Natural killer cell (primary cell): ENCODE measurements at regions of chr17 and their contacts with region 1.

Region 1: DNA sequence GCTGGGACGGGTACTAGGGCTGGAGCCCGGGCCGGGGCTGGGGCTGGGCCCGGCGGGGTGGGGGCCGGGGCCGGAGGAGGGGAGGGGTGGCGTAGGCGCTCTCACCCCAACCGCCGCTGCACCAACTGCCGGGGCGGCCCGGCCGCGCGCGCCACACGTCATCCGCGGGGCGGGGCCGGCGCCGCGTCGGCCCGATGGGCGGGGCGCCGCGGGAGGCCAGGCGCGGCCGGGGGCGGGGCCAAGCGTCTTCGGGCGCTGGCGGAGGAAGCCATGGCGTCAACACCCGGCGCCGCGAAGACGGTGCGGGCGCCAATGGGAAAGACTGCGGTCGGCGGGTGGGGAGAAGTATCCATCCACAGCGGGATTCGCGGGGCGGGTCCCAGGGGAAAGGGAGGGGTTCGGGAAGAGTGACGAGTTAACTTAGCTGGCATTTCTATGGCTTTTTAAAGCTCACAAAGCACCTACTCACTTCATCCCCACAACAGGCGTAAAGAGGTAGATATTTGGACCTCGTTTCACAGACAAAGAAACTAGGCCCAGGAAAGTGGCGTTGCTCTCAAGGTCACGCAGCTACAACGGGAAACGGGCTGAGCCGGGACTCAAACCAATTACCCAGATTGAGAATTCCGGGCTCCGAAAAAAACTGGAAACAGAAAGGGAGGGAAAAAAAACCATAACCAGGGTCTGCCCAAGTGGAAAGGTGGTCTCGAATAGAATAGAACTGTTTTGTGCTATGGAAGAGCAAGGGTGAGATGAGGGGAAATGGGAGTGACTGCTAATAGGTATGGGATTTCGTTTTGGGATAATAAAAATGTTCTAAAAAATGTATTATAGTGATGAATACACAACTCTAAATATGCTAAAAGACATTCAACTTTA is at the start of gene SPAG9:
- DNase-seq: peak; percentile 93 to 97
- ATAC-seq: peak; percentile 84 to 95 (median 89)
- H3K4me3 ChIP-seq: peak within 1 kb of the TSS; percentile 85
- H3K4me3 Mint-ChIP-seq: peak within 1 kb of the TSS; percentile 94
- H3K27ac ChIP-seq: peak within 1 kb of the TSS; percentile 93
- H3K27ac Mint-ChIP-seq: peak within 1 kb of the TSS; percentile 96 to 97
- H3K4me1 ChIP-seq: peaks cover 27% of the 10 kb centered on the region
- H3K4me1 Mint-ChIP-seq: peaks cover 42 to 51% of the 10 kb centered on the region in 2 donors
- H3K27me3 ChIP-seq: no peaks in the 10 kb centered on the region
- H3K27me3 Mint-ChIP-seq: no peaks in the 10 kb centered on the region
- CTCF ChIP-seq: no peak
- total RNA-seq, gene SPAG9: 78.1 to 91.7 (median 90.3) TPM

Region 2: GRCh38 chr17:51035431-51035830 is 85.5 kb before region 1 on chr17:
- intact Hi-C with region 1: loop called (anchors 10 kb)
- DNase-seq: no peak
- ATAC-seq: no peak
- H3K4me3 ChIP-seq: no peak overlapping the region
- H3K4me3 Mint-ChIP-seq: no peak overlapping the region
- H3K27ac ChIP-seq: no peak overlapping the region
- H3K27ac Mint-ChIP-seq: no peak overlapping the region
- H3K4me1 ChIP-seq: no peaks in the 10 kb centered on the region
- H3K4me1 Mint-ChIP-seq: peaks cover 13 to 22% of the 10 kb centered on the region in 2 donors
- H3K27me3 ChIP-seq: no peaks in the 10 kb centered on the region
- H3K27me3 Mint-ChIP-seq: no peaks in the 10 kb centered on the region
- CTCF ChIP-seq: no peak

Region 3: DNA sequence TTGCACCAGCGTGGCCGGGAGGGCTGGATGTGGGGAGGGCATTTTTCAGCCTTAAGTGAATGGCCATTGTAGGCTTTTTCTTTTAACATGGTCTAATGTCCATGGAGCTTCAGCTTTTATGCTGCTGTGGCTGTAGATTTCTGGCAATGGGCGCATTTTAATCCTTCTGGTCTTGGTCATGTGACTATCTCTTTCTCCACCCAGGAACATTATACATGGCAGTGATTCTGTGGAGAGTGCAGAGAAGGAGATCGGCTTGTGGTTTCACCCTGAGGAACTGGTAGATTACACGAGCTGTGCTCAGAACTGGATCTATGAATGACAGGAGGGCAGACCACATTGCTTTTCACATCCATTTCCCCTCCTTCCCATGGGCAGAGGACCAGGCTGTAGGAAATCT is 40.5 kb after region 1 on chr17:
- intact Hi-C with region 1: no loop called
- DNase-seq: no peak
- ATAC-seq: no peak
- H3K4me3 ChIP-seq: no peak overlapping the region
- H3K4me3 Mint-ChIP-seq: no peak overlapping the region
- H3K27ac ChIP-seq: no peak overlapping the region
- H3K27ac Mint-ChIP-seq: no peak overlapping the region
- H3K4me1 ChIP-seq: peaks cover 11% of the 10 kb centered on the region
- H3K4me1 Mint-ChIP-seq: peaks cover 10 to 16% of the 10 kb centered on the region in 2 donors
- H3K27me3 ChIP-seq: no peaks in the 10 kb centered on the region
- H3K27me3 Mint-ChIP-seq: no peaks in the 10 kb centered on the region
- CTCF ChIP-seq: no peak

Region 4: GRCh38 chr17:51260125-51260880 is 139.3 kb after region 1 on chr17 and contains the start of gene UTP18:
- intact Hi-C with region 1: loop called (anchors 1 kb)
- DNase-seq: peak; percentile 93 to 99
- ATAC-seq: peak; percentile 85 to 96 (median 86)
- H3K4me3 ChIP-seq: peak within 1 kb of the TSS; percentile 53
- H3K4me3 Mint-ChIP-seq: peak within 1 kb of the TSS; percentile 94
- H3K27ac ChIP-seq: peak within 1 kb of the TSS; percentile 85
- H3K27ac Mint-ChIP-seq: peak within 1 kb of the TSS; percentile 91 to 97
- H3K4me1 ChIP-seq: peaks cover 26% of the 10 kb centered on the region
- H3K4me1 Mint-ChIP-seq: peaks cover 43 to 52% of the 10 kb centered on the region in 2 donors
- H3K27me3 ChIP-seq: no peaks in the 10 kb centered on the region
- H3K27me3 Mint-ChIP-seq: no peaks in the 10 kb centered on the region
- CTCF ChIP-seq: no peak
- total RNA-seq, gene UTP18: 33.5 to 40.3 (median 34.6) TPM

Region 5: GRCh38 chr17:51499897-51500296 is 378.9 kb after region 1 on chr17:
- intact Hi-C with region 1: no loop called
- DNase-seq: no peak
- ATAC-seq: no peak
- H3K4me3 ChIP-seq: no peak overlapping the region
- H3K4me3 Mint-ChIP-seq: no peak overlapping the region
- H3K27ac ChIP-seq: no peak overlapping the region
- H3K27ac Mint-ChIP-seq: no peak overlapping the region
- H3K4me1 ChIP-seq: no peaks in the 10 kb centered on the region
- H3K4me1 Mint-ChIP-seq: no peaks in the 10 kb centered on the region
- H3K27me3 ChIP-seq: peaks cover 2% of the 10 kb centered on the region
- H3K27me3 Mint-ChIP-seq: peaks cover 18 to 58% of the 10 kb centered on the region in 2 donors
- CTCF ChIP-seq: no peak